CD8-positive, alpha-beta T cell (primary cell): ENCODE measurements at regions of chr21 and their contacts with region 1.

Region 1: GRCh38 chr21:37398697-37399096 is 32.1 kb downstream of the DYRK1A start:
- DNase-seq: peak in 3 of 9 experiments; percentile 32 to 53 (median 41)
- ATAC-seq: peak; percentile 82
- H3K4me3 ChIP-seq: no peak overlapping the region
- H3K4me3 Mint-ChIP-seq: peak overlapping the region; percentile 27
- H3K27ac ChIP-seq: no peak overlapping the region
- H3K27ac Mint-ChIP-seq: peak overlapping the region; percentile 55
- H3K4me1 ChIP-seq: peaks cover 53% of the 10 kb centered on the region
- H3K4me1 Mint-ChIP-seq: peaks cover 88% of the 10 kb centered on the region
- H3K27me3 ChIP-seq: no peaks in the 10 kb centered on the region
- H3K27me3 Mint-ChIP-seq: no peaks in the 10 kb centered on the region
- CTCF ChIP-seq: no peak

Region 2: DNA sequence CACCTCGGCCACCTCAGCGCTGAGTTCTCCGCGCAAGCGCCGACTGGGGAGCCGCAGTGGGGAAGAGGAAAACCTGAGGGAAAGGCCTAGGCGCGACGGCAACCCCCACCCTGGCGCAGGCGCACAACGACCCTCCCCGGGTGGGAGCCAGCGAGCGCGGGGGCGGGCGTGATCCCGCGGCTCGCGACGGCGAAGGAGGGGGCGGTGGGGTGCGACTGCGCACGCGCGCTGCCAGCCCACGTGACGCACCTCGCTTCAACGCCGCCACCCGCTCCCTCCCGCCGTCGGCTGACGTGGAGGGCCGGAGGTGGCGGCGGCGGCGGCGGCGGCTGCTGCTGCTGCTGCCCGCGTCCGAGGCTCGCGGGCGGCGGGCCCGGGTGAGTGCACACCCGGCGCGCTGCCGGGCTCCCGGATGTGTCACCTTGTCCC is 325.7 kb before region 1 on chr21 and contains the starts of genes PIGP and TTC3:
- CTCF ChIA-PET with region 1: no interaction called
- POLR2A ChIA-PET with region 1: no interaction called
- intact Hi-C with region 1: no loop called
- DNase-seq: peak; percentile 89 to 99 (median 95)
- ATAC-seq: peak; percentile 62
- H3K4me3 ChIP-seq: peak within 1 kb of the TSS; percentile 86 to 94
- H3K4me3 Mint-ChIP-seq: peak within 1 kb of the TSS; percentile 99
- H3K27ac ChIP-seq: peak within 1 kb of the TSS; percentile 96 to 98
- H3K27ac Mint-ChIP-seq: peak within 1 kb of the TSS; percentile 99
- H3K4me1 ChIP-seq: peaks cover 30% of the 10 kb centered on the region
- H3K4me1 Mint-ChIP-seq: peaks cover 57% of the 10 kb centered on the region
- H3K27me3 ChIP-seq: no peaks in the 10 kb centered on the region
- H3K27me3 Mint-ChIP-seq: no peaks in the 10 kb centered on the region
- CTCF ChIP-seq: no peak
- total RNA-seq, gene PIGP: 11.9 to 12.2 TPM
- total RNA-seq, gene TTC3: 137 to 141 TPM

Region 3: GRCh38 chr21:37383086-37383485 is 15.6 kb before region 1 on chr21:
- CTCF ChIA-PET with region 1: no interaction called
- POLR2A ChIA-PET with region 1: no interaction called
- intact Hi-C with region 1: loop called in 1 of 2 experiments (anchors 2 kb)
- DNase-seq: no peak
- ATAC-seq: no peak
- H3K4me3 ChIP-seq: no peak overlapping the region
- H3K4me3 Mint-ChIP-seq: peak overlapping the region; percentile 23
- H3K27ac ChIP-seq: no peak overlapping the region
- H3K27ac Mint-ChIP-seq: no peak overlapping the region
- H3K4me1 ChIP-seq: peaks cover 87% of the 10 kb centered on the region
- H3K4me1 Mint-ChIP-seq: peaks cover 92% of the 10 kb centered on the region
- H3K27me3 ChIP-seq: no peaks in the 10 kb centered on the region
- H3K27me3 Mint-ChIP-seq: no peaks in the 10 kb centered on the region
- CTCF ChIP-seq: no peak